Calu3 (cell line): ENCODE measurements at regions of chr7 and their contacts with region 1.

Region 1: DNA sequence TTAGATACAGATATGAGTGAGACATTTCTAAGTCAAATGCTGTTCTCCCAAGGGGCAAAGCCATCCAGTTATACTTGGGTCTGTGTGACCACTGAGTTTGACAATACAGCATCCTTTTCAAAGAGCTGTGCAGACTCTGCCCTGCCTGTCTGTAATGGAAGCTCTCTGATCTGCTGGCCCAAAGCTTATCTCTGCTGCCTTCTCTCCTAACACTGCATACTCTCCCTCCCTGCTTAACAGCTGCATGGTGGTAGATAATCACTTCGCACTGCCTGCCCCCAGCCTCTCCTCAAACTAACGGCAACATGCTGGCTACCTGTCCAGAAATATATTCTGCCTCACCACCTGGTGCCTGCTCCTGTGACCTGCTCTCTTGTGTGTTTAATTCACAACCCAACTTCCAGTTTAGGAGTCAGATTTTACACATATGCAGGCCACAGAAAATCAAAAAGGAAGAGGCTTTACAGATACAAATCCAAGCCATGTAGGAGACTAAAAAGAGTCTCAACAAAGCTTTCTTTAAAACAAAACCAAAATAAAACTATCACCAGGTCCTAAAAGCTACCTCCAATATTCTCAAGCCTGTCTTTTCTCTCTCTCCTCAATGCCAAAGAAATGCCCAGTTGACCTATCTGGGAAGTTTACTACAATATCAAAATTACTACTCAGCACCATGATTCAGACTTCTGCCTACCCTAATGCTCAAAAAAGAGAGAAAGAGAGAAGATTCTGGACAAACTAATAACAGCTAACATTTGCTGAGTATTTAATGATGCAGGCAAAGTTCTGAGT is 145.6 kb downstream of the RELN start:
- DNase-seq: no peak
- H3K4me3 Mint-ChIP-seq: no peak overlapping the region
- H3K27ac Mint-ChIP-seq: no peak overlapping the region
- H3K4me1 Mint-ChIP-seq: no peaks in the 10 kb centered on the region
- H3K27me3 Mint-ChIP-seq: peaks cover 3% of the 10 kb centered on the region
- CTCF ChIP-seq: no peak

Region 2: GRCh38 chr7:103919272-103919868 is 75.5 kb after region 1 on chr7:
- CTCF ChIA-PET with region 1: no interaction called
- intact Hi-C with region 1: no loop called
- DNase-seq: no peak
- H3K4me3 Mint-ChIP-seq: no peak overlapping the region
- H3K27ac Mint-ChIP-seq: no peak overlapping the region
- H3K4me1 Mint-ChIP-seq: peaks cover 12% of the 10 kb centered on the region
- H3K27me3 Mint-ChIP-seq: no peaks in the 10 kb centered on the region
- CTCF ChIP-seq: no peak

Region 3: DNA sequence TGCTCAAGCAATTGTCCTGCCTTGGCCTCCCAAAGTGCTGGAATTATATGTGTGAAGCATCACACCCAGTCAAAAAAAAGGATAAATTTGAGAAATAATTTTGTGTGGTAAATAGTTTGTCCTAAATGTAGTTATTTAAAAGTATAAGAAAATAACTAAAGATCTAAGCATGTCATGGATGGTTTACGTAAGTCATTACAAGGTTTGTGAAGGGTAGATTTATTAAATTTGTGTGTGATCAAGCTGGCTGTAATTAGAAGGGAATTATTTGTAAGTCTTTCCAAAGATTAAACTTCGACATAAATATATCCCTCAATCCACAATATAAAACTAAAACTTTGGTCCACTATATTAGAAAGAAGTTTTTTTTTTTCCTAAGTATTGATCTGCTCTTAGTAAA is 335.3 kb after region 1 on chr7:
- CTCF ChIA-PET with region 1: interaction called, 14 read pairs
- intact Hi-C with region 1: no loop called
- DNase-seq: no peak
- H3K4me3 Mint-ChIP-seq: no peak overlapping the region
- H3K27ac Mint-ChIP-seq: no peak overlapping the region
- H3K4me1 Mint-ChIP-seq: no peaks in the 10 kb centered on the region
- H3K27me3 Mint-ChIP-seq: no peaks in the 10 kb centered on the region
- CTCF ChIP-seq: no peak